HEK293 (cell line): ENCODE measurements at regions of chr10 and their contacts with region 1.

Region 1: GRCh38 chr10:109966961-109967738 is 40.6 kb upstream of the ADD3 start:
- H3K4me3 ChIP-seq: no peak overlapping the region
- H3K27ac ChIP-seq: peak overlapping the region; percentile 13; the same call in 1 of the 2 replicates
- H3K4me1 ChIP-seq: peaks cover 20% of the 10 kb centered on the region
- CTCF ChIP-seq: no peak

Region 2: DNA sequence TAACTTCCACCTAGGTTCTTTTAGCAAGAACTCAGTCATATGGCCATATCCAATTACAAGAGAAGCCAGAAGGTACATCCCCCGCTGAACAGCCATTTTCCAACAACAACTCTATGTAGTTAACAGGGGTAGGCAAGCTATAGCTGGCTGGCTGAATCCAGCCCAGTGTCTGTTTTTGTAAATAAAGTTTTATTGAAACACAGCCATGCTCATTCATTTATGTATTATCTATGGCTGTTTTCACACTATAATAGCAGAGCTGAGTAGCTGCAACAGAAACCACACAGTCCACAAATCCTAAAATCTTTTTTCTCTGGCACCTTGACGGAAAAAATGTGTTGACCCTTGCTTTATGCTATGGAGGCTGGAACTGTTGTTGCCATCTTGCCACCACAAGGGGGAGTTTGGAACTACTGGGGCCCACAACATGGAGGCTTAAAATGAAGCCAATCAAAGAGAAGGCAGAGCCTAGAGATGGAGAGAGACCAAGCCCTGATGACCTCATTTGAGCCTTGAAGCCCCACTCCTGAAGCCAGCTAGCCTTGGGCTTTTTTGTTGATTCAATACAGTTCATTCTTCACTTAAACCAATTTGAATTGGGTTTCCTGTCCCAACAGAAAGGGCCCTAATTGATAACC is 10.6 kb before region 1 on chr10:
- CTCF ChIA-PET with region 1: interaction called, 14 read pairs
- POLR2A ChIA-PET with region 1: no interaction called
- H3K4me3 ChIP-seq: no peak overlapping the region
- H3K27ac ChIP-seq: no peak overlapping the region
- H3K4me1 ChIP-seq: peaks cover 10% of the 10 kb centered on the region
- CTCF ChIP-seq: no peak